AG04450 (cell line): ENCODE measurements at regions of chr17 and their contacts with region 1.

Region 1: GRCh38 chr17:5468075-5468473 is 708 bp downstream of the DHX33 start:
- DNase-seq: no peak
- H3K4me3 ChIP-seq: peak overlapping the region; percentile 90
- H3K27ac ChIP-seq: peak overlapping the region; percentile 13
- H3K27me3 ChIP-seq: no peaks in the 10 kb centered on the region
- CTCF ChIP-seq: no peak

Region 2: GRCh38 chr17:5272322-5272721 is 195.8 kb before region 1 on chr17:
- CTCF ChIA-PET with region 1: no interaction called
- POLR2A ChIA-PET with region 1: no interaction called
- DNase-seq: no peak
- H3K4me3 ChIP-seq: no peak overlapping the region
- H3K27ac ChIP-seq: no peak overlapping the region
- H3K27me3 ChIP-seq: peaks cover 4% of the 10 kb centered on the region
- CTCF ChIP-seq: no peak

Region 3: GRCh38 chr17:5396612-5397011 is 71.5 kb before region 1 on chr17:
- CTCF ChIA-PET with region 1: no interaction called
- POLR2A ChIA-PET with region 1: no interaction called
- DNase-seq: no peak
- H3K4me3 ChIP-seq: no peak overlapping the region
- H3K27ac ChIP-seq: no peak overlapping the region
- H3K27me3 ChIP-seq: no peaks in the 10 kb centered on the region
- CTCF ChIP-seq: no peak

Region 4: DNA sequence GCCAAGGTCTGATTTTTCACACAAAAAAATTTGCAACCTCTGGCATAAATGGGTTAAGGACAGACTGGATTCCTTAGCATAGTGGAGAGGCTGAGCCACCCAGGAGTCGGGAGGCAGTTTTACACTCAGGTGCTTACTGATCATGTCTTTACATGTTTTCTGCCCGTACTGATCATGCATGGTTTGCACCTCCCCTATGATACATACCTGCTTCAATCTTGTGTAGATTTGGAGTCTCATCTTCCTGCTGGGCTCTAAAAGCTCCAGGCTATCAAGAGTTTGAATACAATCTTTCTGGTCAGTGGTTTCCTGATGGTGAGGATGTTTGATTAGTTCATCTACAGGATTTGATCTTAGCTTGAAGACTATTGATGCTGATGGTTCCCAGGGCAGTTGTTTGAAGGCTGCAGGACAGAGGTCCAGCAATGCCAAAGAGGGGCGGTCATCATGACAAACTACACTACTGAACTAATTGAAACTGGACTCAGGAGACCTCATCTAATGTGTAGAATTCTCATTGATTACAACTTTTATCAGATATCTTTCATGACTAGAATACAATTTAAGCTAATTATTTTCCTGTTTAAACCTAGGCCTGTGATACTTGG is 36.0 kb before region 1 on chr17:
- CTCF ChIA-PET with region 1: no interaction called
- POLR2A ChIA-PET with region 1: no interaction called
- DNase-seq: no peak
- H3K4me3 ChIP-seq: no peak overlapping the region
- H3K27ac ChIP-seq: no peak overlapping the region
- H3K27me3 ChIP-seq: no peaks in the 10 kb centered on the region
- CTCF ChIP-seq: no peak

Region 5: DNA sequence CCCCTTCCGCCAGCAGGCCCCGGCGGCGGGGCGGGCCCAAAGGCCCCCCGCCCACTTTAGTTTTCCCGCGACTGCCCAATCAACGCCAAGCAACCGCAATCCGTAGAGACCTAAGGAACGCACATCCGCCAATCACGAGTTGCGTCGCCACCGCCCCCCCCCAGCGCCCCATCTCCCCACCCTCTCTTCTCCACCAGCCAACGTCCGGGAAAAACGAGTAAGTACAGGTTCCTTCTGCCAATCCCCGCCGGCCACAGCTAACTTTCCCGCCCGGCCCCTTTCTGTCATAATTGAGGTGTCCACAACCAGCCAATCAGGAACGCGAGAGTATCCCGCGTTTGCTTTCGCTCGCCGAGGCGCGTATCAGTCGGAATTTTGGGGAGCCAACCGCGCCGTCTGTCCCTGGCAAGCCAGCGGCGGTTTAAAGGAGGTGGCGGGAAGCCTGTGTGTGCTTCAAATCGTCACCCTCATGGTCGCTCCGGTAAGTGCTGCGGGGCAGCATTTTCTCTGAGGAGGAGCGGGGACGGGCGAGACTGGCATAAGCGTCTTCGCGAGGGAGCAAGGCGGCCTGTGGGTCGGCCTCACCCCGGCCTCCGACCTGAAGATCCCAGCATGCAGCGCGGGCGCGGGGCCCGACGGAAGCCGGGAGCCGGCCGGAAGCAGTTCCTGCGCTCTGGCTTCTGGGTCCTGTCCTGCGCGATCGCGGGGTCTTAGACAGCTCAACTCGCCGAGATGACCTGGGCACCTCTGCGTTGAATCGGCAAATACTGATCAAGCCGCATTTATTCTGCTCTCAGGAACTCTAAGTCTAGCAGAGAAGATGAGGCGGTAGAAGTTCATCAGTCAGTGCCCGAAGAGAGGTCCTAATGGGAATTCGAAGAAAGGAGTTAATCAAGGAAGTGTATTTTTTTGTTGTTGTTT is 18.4 kb after region 1 on chr17 and contains the start of gene MIS12:
- CTCF ChIA-PET with region 1: no interaction called
- POLR2A ChIA-PET with region 1: interaction called, 12 read pairs
- DNase-seq: peak; percentile 98
- H3K4me3 ChIP-seq: peak within 1 kb of the TSS; percentile 91
- H3K27ac ChIP-seq: peak within 1 kb of the TSS; percentile 99
- H3K27me3 ChIP-seq: no peaks in the 10 kb centered on the region
- CTCF ChIP-seq: no peak
- polyA plus RNA-seq, gene MIS12: 10.0 and 13.7 TPM in 2 replicates